Activated CD8-positive, alpha-beta T cell treated with anti-CD3 and anti-CD28 coated beads for 36 hours (primary cell): ENCODE measurements at regions of chr20 and their contacts with region 1.

Region 1: GRCh38 chr20:29123861-29124260 is 2133.6 kb upstream of the DEFB115 start:
- DNase-seq: no peak
- ATAC-seq: no peak
- H3K4me3 Mint-ChIP-seq: no peak overlapping the region
- H3K27ac Mint-ChIP-seq: no peak overlapping the region
- H3K4me1 Mint-ChIP-seq: no peaks in the 10 kb centered on the region
- H3K27me3 Mint-ChIP-seq: no peaks in the 10 kb centered on the region
- CTCF ChIP-seq: no peak

Region 2: DNA sequence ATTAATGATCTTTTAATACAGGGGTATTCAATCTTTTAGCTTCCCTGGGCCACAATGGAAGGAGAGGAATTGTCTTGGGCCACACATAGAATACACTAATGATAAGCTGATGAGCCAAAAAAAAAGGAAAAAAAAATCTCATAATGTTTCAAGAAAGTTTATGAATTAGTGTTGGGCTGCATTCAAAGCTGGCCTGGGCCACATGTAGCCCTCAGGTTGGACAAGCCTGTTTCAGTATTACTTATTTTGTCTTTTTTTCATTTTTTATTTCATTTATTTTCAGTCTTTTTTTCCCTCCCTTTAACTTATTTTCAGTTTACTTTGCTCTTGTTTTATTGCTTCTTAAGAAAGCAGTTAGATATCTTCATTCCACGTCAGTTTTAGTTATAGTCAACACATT is 38.2 kb before region 1 on chr20:
- CTCF ChIA-PET with region 1: no interaction called
- POLR2A ChIA-PET with region 1: no interaction called
- intact Hi-C with region 1: no loop called
- DNase-seq: no peak
- ATAC-seq: no peak
- H3K4me3 Mint-ChIP-seq: no peak overlapping the region
- H3K27ac Mint-ChIP-seq: no peak overlapping the region
- H3K4me1 Mint-ChIP-seq: no peaks in the 10 kb centered on the region
- H3K27me3 Mint-ChIP-seq: no peaks in the 10 kb centered on the region
- CTCF ChIP-seq: no peak

Region 3: GRCh38 chr20:29873946-29874345 is 750.1 kb after region 1 on chr20:
- CTCF ChIA-PET with region 1: no interaction called
- POLR2A ChIA-PET with region 1: no interaction called
- intact Hi-C with region 1: loop called (anchors 10 kb)
- DNase-seq: peak; percentile 51
- ATAC-seq: no peak
- H3K4me3 Mint-ChIP-seq: no peak overlapping the region
- H3K27ac Mint-ChIP-seq: no peak overlapping the region
- H3K4me1 Mint-ChIP-seq: no peaks in the 10 kb centered on the region
- H3K27me3 Mint-ChIP-seq: no peaks in the 10 kb centered on the region
- CTCF ChIP-seq: no peak